ENCODE measurements at regions of chrX and their contacts with region 1.

Region 1: DNA sequence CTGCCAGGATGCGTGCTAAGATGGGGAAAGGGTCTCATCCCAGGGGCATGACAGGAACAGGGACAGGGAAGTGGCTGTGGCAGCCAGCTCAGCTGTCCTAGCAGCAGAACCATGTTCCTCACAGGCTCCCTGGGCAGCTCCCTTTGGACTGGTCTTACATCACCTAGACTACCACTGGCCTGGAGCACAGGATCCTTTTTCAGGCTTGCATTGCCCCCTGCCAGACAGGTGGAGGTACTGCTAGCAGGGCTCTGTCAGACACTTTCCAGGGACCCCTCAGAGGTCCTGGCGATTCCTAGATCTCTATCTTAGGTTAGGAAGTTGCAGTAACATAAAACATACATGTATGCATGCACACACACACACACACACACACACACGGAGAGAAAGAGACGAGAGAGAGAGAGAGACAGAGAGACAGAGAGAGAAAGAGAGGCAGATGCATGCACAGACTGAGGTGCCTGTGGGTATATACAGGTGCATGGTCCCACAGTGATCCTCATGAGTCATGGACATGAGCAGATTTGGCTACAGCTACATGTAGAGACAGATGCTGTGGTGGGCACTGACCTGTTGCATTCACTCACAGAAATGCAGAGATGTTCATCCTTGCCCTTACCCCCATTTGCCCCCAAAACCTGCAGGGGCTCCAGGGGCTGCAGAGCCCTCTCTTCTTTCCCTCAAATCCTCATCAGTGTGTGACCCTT is 63.6 kb downstream of the STARD8 start:
- DNase-seq: no peak
- H3K4me3 ChIP-seq: no peak overlapping the region
- CTCF ChIP-seq: peak; percentile 64

Region 2: GRCh38 chrX:68511255-68511654 is 199.8 kb before region 1 on chrX:
- CTCF ChIA-PET with region 1: interaction called, 69 read pairs
- POLR2A ChIA-PET with region 1: no interaction called
- DNase-seq: no peak
- H3K4me3 ChIP-seq: no peak overlapping the region
- CTCF ChIP-seq: peak; percentile 60

Region 3: GRCh38 chrX:68599251-68600152 is 111.5 kb before region 1 on chrX:
- CTCF ChIA-PET with region 1: interaction called, 34 read pairs
- POLR2A ChIA-PET with region 1: no interaction called
- DNase-seq: no peak
- H3K4me3 ChIP-seq: no peak overlapping the region
- CTCF ChIP-seq: peak; percentile 29

Region 4: GRCh38 chrX:68746988-68747387 is 36.0 kb after region 1 on chrX:
- CTCF ChIA-PET with region 1: no interaction called
- POLR2A ChIA-PET with region 1: no interaction called
- DNase-seq: no peak
- H3K4me3 ChIP-seq: no peak overlapping the region
- CTCF ChIP-seq: no peak